Calu3 (cell line): ENCODE measurements at regions of chr5 and their contacts with region 1.

Region 1: DNA sequence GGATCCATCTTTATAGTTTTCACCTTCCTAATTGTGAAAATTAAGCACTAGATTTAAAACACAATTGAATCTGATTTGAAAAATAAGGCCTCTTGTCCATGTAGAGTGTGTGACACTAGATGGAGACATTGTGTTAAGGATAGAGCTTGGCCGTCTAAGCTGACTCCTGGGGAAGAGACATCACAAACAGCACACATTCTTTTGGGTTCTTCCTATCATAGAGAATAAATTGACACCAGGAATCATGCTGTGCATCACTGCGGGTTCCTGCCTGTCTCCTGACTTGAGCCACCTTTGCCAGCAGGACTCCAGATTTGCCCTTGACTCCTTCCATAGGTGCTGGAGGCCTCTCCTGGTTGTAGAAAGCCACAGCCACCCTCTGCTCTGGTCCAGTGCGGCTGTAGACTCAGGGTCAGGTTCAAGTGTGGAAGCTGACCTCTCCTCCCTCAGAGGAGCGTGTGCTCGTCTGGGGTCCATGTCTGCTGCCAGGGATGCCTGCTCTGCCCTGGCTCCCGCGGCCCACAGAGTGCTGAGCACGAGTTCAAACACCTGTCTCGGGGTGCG is 11.2 kb downstream of the ROPN1L start:
- DNase-seq: peak; percentile 31
- H3K4me3 Mint-ChIP-seq: no peak overlapping the region
- H3K27ac Mint-ChIP-seq: no peak overlapping the region
- H3K4me1 Mint-ChIP-seq: peaks cover 9% of the 10 kb centered on the region
- H3K27me3 Mint-ChIP-seq: no peaks in the 10 kb centered on the region
- CTCF ChIP-seq: peak; percentile 30

Region 2: DNA sequence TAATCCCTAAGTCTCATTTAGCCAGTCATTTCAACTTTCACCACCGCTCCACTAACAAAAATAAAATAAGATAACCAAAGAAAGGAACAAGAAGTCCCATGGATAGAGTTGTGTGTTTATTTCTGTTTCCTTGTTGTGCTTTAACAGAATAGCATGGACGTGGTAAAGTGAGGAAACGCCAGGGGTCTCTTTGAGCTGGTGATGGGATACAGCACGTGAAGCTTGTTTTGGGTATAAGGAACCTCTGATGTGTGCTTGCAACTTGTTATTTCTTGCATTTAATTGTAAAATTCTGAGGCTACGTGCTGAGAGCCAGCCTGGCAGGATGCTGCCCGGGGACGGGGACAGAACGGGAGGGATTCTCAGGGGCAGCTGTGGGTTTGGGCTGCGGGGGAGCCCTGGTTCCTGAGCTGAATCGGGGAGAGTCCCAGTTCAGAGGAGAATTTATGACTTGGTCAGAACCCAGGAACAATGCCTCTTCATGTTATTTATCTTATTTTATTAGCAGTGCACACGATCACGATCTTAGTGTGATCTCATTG is 174.4 kb after region 1 on chr5:
- CTCF ChIA-PET with region 1: interaction called, 75 read pairs
- intact Hi-C with region 1: loop called (anchors 1 kb)
- DNase-seq: no peak
- H3K4me3 Mint-ChIP-seq: peak overlapping the region; percentile 66
- H3K27ac Mint-ChIP-seq: peak overlapping the region; percentile 67
- H3K4me1 Mint-ChIP-seq: peaks cover 19% of the 10 kb centered on the region
- H3K27me3 Mint-ChIP-seq: peaks cover 20% of the 10 kb centered on the region
- CTCF ChIP-seq: no peak

Region 3: DNA sequence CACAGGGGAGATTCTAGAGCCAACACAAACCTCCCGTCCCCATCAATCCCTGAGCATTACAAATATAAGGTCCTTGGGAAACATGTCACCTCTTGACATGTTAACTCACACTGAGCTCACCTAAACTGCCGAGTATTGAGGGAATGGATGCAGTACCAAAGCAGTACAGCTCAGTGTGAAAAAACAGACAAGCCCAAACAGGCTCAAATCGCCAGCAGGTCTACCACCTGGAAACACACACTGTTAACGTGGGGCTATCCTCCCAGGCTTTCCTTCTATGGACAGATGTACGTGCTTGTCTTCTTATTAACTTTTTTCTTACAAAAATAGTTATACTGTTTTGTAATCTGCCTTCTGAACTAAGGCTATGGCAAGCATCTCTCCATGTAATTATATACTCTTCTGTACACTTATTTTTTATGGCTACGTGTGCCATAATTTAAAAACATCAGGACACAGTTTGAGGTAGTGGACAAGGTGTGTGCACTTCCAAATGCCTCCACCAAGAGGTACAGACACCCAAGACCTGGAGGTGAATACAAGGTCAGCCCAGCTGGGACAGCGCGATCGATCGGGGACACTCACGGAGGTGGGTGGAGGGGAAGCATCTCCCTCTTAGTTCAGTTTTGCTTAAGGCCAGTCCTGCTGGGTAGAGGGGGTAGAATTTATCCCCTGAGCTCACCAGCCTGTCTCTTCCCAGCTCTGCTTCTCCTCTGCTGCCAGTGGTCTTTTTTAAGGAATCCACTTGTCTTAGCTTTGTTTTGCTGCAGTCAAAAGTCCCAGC is 231.6 kb after region 1 on chr5:
- CTCF ChIA-PET with region 1: no interaction called
- intact Hi-C with region 1: loop called (anchors 5 kb)
- DNase-seq: no peak
- H3K4me3 Mint-ChIP-seq: no peak overlapping the region
- H3K27ac Mint-ChIP-seq: no peak overlapping the region
- H3K4me1 Mint-ChIP-seq: no peaks in the 10 kb centered on the region
- H3K27me3 Mint-ChIP-seq: no peaks in the 10 kb centered on the region
- CTCF ChIP-seq: no peak

Region 4: DNA sequence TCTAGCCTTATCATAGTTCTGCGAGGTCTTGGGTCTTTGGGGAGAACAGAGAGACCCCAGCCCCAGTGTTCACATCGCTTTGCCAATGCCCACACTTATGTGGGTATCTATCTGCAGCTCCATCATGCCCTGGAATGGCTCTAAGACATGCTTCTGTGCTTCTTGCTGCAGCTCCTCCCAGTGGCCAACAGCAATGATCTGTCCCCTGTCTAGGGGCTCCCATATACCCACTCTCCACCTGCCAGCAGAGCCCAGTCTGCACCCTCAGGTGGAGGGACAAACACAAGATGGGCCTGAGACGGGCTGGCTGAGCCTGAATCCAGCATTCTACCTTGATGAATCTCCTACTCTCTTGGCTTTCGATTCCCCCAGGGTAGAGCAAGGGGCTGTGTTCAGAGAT is 322.8 kb after region 1 on chr5:
- CTCF ChIA-PET with region 1: no interaction called
- intact Hi-C with region 1: loop called (anchors 10 kb)
- DNase-seq: no peak
- H3K4me3 Mint-ChIP-seq: no peak overlapping the region
- H3K27ac Mint-ChIP-seq: no peak overlapping the region
- H3K4me1 Mint-ChIP-seq: no peaks in the 10 kb centered on the region
- H3K27me3 Mint-ChIP-seq: peaks cover 13% of the 10 kb centered on the region
- CTCF ChIP-seq: no peak

Region 5: DNA sequence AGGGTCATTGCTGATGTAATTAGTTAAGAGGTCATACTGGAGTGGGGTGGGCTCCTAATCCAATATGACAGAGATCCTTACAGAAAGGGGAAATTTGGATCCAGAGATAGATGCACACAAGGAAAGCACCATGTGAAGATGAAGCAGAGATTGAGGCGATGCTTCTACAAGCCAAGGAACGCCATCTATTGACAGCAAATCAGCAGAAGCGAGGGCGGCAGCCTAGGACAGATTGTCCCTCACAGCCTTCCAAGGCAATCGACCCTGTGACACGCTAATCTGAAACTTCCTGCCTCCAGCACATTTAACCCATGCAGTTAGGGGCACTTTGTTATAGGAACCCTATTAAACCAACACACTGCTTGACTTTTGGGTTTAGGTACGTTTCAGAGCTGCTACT is 593.3 kb after region 1 on chr5:
- CTCF ChIA-PET with region 1: no interaction called
- intact Hi-C with region 1: loop called (anchors 2 kb)
- DNase-seq: no peak
- H3K4me3 Mint-ChIP-seq: no peak overlapping the region
- H3K27ac Mint-ChIP-seq: no peak overlapping the region
- H3K4me1 Mint-ChIP-seq: peaks cover 5% of the 10 kb centered on the region
- H3K27me3 Mint-ChIP-seq: no peaks in the 10 kb centered on the region
- CTCF ChIP-seq: no peak

Region 6: DNA sequence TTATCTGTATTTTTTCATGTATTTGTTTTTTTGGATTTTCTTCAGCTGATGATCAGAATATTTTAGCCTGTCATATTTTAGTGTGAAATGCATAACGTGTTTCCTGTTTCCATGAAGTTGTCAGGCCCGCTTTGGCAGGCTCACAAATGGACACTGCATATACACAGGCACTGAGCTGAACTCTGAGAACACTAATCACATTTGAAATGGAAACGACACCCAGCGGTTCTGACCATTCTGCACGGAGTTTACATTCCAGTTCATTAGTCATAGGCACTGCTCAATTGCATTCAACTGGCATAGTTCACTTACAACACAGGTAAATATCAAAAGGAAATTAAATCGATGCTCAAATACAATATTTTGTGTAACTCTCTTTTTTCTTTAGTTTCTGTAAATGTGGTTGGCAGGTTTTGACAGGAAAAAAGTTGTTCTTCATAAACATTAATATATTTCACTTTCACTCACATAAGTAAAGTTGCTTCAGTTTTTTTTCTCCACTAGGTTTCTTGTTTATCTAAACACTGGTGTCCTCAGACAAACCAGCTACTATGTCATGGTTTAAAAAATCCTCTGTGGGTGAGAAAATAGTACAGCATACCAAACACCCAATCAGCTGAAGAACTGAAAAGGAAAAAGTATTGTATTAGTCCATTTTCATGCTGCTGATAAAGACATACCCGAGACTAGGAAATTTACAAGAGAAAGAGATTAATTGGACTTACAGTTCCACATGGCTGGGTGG is 867.2 kb after region 1 on chr5:
- CTCF ChIA-PET with region 1: no interaction called
- intact Hi-C with region 1: no loop called
- DNase-seq: peak; percentile 41
- H3K4me3 Mint-ChIP-seq: no peak overlapping the region
- H3K27ac Mint-ChIP-seq: no peak overlapping the region
- H3K4me1 Mint-ChIP-seq: peaks cover 29% of the 10 kb centered on the region
- H3K27me3 Mint-ChIP-seq: no peaks in the 10 kb centered on the region
- CTCF ChIP-seq: no peak